Ascending aorta (tissue), 2 donors: ENCODE measurements at regions of chr6 and their contacts with region 1.

Region 1: GRCh38 chr6:36642913-36643817 is 35.3 kb upstream of the CDKN1A start:
- DNase-seq: peak; percentile 83 to 96
- H3K4me3 ChIP-seq: no peak overlapping the region
- H3K27ac ChIP-seq: peak overlapping the region; percentile 47 to 56
- H3K4me1 ChIP-seq: peaks cover 3 to 17% of the 10 kb centered on the region in 2 donors
- H3K27me3 ChIP-seq: no peaks in the 10 kb centered on the region
- CTCF ChIP-seq: no peak

Region 2: GRCh38 chr6:36629784-36630183 is 13.4 kb before region 1 on chr6:
- intact Hi-C with region 1: loop called (anchors 1 kb)
- DNase-seq: no peak
- H3K4me3 ChIP-seq: no peak overlapping the region
- H3K27ac ChIP-seq: peak overlapping the region; percentile 85 to 90
- H3K4me1 ChIP-seq: peaks cover 20 to 37% of the 10 kb centered on the region in 2 donors
- H3K27me3 ChIP-seq: no peaks in the 10 kb centered on the region
- CTCF ChIP-seq: no peak

Region 3: DNA sequence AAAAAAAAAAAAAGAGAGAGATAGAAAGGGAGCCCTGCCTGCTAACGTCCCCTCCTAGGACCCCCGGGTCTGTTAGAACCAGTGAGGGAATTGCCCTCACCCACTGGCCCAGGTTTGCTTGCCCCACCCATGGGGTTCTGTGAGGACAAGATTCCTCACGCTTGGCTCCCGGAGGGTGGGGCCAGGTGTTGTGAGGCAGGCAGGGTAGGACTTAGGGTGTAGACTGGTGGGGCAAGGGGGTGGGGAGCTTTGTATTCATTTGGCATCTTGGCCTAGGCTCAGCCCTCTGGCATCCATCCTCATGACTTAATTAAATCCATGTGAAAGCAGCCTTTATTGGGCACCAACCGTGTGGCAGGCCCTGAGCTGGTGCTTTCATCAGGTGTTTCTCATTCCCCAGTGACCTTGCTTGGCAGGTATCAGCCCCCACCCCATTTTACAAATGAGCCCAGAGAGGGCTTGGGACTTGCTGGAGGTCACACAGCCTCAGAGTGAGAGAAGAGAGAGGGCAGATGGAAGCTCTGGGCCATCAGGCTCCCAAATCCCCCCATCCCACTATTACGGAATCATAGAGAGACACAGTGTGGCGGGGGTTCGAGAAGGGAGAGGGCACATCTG is 73.4 kb after region 1 on chr6:
- intact Hi-C with region 1: no loop called
- DNase-seq: no peak
- H3K4me3 ChIP-seq: no peak overlapping the region
- H3K27ac ChIP-seq: no peak overlapping the region
- H3K4me1 ChIP-seq: no peaks in the 10 kb centered on the region
- H3K27me3 ChIP-seq: no peaks in the 10 kb centered on the region
- CTCF ChIP-seq: no peak

Region 4: DNA sequence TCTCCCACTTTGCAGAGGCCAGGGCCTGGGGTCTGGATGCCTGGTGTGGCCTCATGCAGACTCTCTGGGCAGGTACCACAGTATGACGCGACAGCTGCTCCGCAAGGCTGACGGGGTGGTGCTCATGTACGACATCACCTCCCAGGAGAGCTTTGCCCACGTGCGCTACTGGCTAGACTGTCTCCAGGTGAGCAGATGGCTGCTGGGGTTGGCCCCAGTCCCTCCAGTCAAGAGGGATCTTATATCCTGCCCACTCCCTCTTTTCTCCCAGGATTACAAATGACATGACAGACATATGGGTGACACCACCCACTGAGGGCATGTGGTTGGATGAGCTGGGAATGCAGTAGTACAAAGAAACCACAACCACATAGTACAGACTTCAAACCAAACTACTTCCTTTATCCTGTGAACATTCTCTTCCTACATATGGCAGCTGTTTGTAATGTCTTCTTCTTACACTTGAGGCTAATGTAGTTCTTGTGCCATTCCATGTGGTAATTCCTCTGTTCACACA is 84.4 kb after region 1 on chr6:
- intact Hi-C with region 1: no loop called
- DNase-seq: no peak
- H3K4me3 ChIP-seq: no peak overlapping the region
- H3K27ac ChIP-seq: no peak overlapping the region
- H3K4me1 ChIP-seq: no peaks in the 10 kb centered on the region
- H3K27me3 ChIP-seq: no peaks in the 10 kb centered on the region
- CTCF ChIP-seq: no peak